Right ventricle myocardium inferior (tissue), 1 donor: ENCODE measurements at regions of chr14 and their contacts with region 1.

Region 1: GRCh38 chr14:67943947-67944346 is 124.4 kb downstream of the RAD51B start:
- DNase-seq: no peak
- ATAC-seq: peak; percentile 59

Region 2: DNA sequence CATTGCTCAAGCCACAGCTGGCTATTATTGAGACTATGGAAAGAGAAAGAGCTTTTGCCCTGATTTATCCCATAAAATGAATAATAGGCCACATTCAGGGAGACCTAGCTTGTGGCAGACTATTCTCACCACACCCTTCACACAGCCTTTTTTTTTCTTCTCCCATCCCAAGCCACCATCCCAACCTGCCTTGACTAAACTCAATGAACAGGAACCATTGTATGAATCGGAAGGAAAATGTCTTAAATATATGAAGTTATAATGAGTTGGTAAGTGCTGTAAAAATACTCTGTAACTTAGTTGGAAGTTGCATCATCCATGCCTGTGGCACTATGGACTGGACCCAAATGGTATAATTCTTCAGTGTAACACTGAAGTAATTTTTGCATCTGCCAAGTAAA is 214.0 kb after region 1 on chr14:
- intact Hi-C with region 1: no loop called
- DNase-seq: no peak
- ATAC-seq: no peak

Region 3: GRCh38 chr14:68816262-68816942 is 872.5 kb after region 1 on chr14:
- intact Hi-C with region 1: loop called (anchors 1 kb)
- DNase-seq: peak; percentile 96
- ATAC-seq: peak; percentile 94